ENCODE measurements at regions of chr9 and their contacts with region 1.

Region 1: DNA sequence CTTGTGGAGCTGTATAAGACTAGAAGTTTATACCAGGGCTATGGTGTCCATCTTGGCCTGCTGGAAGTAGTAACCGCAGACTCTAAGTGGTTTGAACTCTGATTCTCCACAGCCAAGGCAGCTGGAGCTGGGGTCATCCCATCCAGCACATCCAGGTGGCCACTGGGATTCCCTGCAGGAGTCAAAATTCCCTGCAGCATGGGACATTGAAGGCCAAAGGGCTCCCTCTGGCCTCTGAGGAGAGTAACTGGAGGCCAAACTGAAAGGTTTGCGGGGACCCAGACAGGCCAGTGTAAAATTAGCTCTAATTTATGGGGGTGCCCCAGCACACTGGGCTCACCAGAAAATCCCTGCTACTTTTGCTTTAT is 12.2 kb upstream of the PRXL2C start:
- DNase-seq: no peak
- H3K4me3 ChIP-seq: no peak overlapping the region
- H3K27ac ChIP-seq: no peak overlapping the region
- H3K4me1 ChIP-seq: no peaks in the 10 kb centered on the region
- H3K27me3 ChIP-seq: no peaks in the 10 kb centered on the region
- CTCF ChIP-seq: no peak
- POLR2A ChIP-seq: no peak

Region 2: GRCh38 chr9:96232539-96233241 is 434.7 kb before region 1 on chr9:
- CTCF ChIA-PET with region 1: interaction called, 22 read pairs
- POLR2A ChIA-PET with region 1: no interaction called
- dilution Hi-C with region 1: no loop called
- intact Hi-C with region 1: loop called (anchors 1 kb)
- DNase-seq: peak; percentile 24
- H3K4me3 ChIP-seq: no peak overlapping the region
- H3K27ac ChIP-seq: no peak overlapping the region
- H3K4me1 ChIP-seq: no peaks in the 10 kb centered on the region
- H3K27me3 ChIP-seq: peaks cover 7% of the 10 kb centered on the region in 2 experiments
- CTCF ChIP-seq: peak; percentile 84 to 87
- POLR2A ChIP-seq: no peak

Region 3: GRCh38 chr9:96441798-96442445 is 225.4 kb before region 1 on chr9:
- CTCF ChIA-PET with region 1: interaction called, 10 read pairs
- POLR2A ChIA-PET with region 1: no interaction called
- dilution Hi-C with region 1: no loop called
- intact Hi-C with region 1: loop called (anchors 2 kb)
- DNase-seq: no peak
- H3K4me3 ChIP-seq: no peak overlapping the region
- H3K27ac ChIP-seq: no peak overlapping the region
- H3K4me1 ChIP-seq: no peaks in the 10 kb centered on the region
- H3K27me3 ChIP-seq: no peaks in the 10 kb centered on the region
- CTCF ChIP-seq: peak; percentile 25 to 28
- POLR2A ChIP-seq: no peak

Region 4: DNA sequence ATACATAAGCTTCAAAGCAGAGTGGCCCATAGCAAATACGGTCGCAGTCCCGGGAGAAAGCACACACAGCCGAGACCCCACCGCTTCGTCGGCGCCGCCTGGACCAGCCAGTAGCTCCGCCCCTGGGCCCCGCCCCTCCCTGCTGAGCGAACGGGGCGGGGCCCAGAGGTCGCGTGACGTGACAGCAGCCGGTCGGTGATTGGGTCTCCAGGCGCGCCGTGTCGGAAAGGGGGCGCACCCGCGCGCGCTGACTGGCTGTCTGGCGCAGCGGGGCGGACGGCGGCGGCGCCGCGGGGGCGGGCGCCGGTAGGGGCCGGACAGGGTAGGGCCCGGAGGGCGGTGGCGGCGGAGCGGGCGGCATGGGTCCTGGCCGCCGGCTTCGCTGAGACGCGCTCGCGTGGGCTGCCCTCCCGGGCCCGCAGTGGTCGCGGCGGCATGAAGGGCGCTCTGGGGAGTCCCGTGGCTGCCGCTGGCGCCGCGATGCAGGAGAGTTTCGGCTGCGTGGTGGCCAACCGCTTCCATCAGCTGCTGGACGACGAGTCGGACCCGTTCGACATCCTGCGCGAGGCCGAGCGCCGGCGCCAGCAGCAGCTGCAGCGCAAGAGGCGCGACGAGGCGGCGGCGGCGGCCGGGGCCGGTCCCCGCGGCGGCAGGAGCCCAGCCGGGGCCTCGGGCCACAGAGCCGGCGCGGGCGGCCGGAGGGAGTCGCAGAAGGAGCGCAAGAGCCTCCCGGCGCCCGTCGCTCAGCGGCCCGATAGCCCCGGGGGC is 217.3 kb before region 1 on chr9 and contains the start of gene HABP4:
- CTCF ChIA-PET with region 1: interaction called, 17 read pairs
- POLR2A ChIA-PET with region 1: no interaction called
- dilution Hi-C with region 1: no loop called
- intact Hi-C with region 1: no loop called
- DNase-seq: peak; percentile 93
- H3K4me3 ChIP-seq: peak within 1 kb of the TSS; percentile 50 to 66 (median 63)
- H3K27ac ChIP-seq: peak within 1 kb of the TSS; percentile 65
- H3K4me1 ChIP-seq: peaks cover 7% of the 10 kb centered on the region
- H3K27me3 ChIP-seq: peaks cover 0 to 2% of the 10 kb centered on the region in 2 experiments
- CTCF ChIP-seq: no peak
- POLR2A ChIP-seq: peak; percentile 54
- total RNA-seq, gene HABP4: 11.1 and 11.7 TPM in 2 replicates

Region 5: GRCh38 chr9:96680812-96681499 is 13.6 kb after region 1 on chr9:
- CTCF ChIA-PET with region 1: no interaction called
- POLR2A ChIA-PET with region 1: no interaction called
- dilution Hi-C with region 1: no loop called
- intact Hi-C with region 1: no loop called
- DNase-seq: no peak
- H3K4me3 ChIP-seq: no peak overlapping the region
- H3K27ac ChIP-seq: no peak overlapping the region
- H3K4me1 ChIP-seq: no peaks in the 10 kb centered on the region
- H3K27me3 ChIP-seq: peaks cover 0 to 3% of the 10 kb centered on the region in 2 experiments
- CTCF ChIP-seq: no peak
- POLR2A ChIP-seq: no peak

Region 6: DNA sequence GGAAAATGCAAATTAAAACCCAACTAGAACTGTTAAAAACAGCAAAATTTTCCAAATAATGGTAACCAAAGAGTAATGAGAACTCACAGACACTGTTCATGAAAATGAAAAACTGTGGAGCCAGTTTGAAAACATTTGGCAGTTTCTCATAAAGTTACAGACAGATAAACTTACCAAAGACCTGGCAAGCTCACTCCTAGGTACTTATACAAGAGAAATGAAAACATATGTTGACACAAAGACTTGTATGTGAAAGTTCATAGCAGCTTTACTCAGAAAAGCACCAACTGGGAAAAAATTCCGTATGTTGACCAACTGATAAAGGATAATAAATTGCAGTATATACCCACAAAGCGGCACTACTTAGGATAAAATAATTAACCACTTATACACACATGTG is 176.7 kb after region 1 on chr9:
- CTCF ChIA-PET with region 1: no interaction called
- POLR2A ChIA-PET with region 1: no interaction called
- dilution Hi-C with region 1: no loop called
- intact Hi-C with region 1: no loop called
- DNase-seq: no peak
- H3K4me3 ChIP-seq: no peak overlapping the region
- H3K27ac ChIP-seq: no peak overlapping the region
- H3K4me1 ChIP-seq: no peaks in the 10 kb centered on the region
- H3K27me3 ChIP-seq: no peaks in the 10 kb centered on the region
- CTCF ChIP-seq: no peak
- POLR2A ChIP-seq: no peak

Region 7: GRCh38 chr9:97398999-97399758 is 731.8 kb after region 1 on chr9:
- CTCF ChIA-PET with region 1: no interaction called
- POLR2A ChIA-PET with region 1: no interaction called
- dilution Hi-C with region 1: no loop called
- intact Hi-C with region 1: no loop called
- DNase-seq: peak; percentile 76
- H3K4me3 ChIP-seq: no peak overlapping the region
- H3K27ac ChIP-seq: no peak overlapping the region
- H3K4me1 ChIP-seq: no peaks in the 10 kb centered on the region
- H3K27me3 ChIP-seq: peaks cover 0 to 5% of the 10 kb centered on the region in 2 experiments
- CTCF ChIP-seq: peak; percentile 97 to 99
- POLR2A ChIP-seq: no peak